HAP-1 (cell line): ENCODE measurements at regions of chr4 and their contacts with region 1.

Region 1: GRCh38 chr4:55736605-55737183 is 82.9 kb upstream of the EXOC1L start:
- DNase-seq: peak in 1 of 2 experiments; percentile 16
- H3K4me3 ChIP-seq: no peak overlapping the region
- H3K4me1 ChIP-seq: peaks cover 2% of the 10 kb centered on the region; the same call in 1 of the 2 replicates
- H3K27me3 ChIP-seq: peaks cover 7% of the 10 kb centered on the region; the same call in 1 of the 2 replicates

Region 2: GRCh38 chr4:55087009-55087929 is 649.4 kb before region 1 on chr4:
- in situ Hi-C with region 1: no loop called
- DNase-seq: peak; percentile 46 to 66
- H3K4me3 ChIP-seq: no peak overlapping the region
- H3K4me1 ChIP-seq: peaks cover 4% of the 10 kb centered on the region
- H3K27me3 ChIP-seq: 0 out of 2 replicates have a peak, but pooled peaks cover 3% of the 10 kb centered on the region

Region 3: DNA sequence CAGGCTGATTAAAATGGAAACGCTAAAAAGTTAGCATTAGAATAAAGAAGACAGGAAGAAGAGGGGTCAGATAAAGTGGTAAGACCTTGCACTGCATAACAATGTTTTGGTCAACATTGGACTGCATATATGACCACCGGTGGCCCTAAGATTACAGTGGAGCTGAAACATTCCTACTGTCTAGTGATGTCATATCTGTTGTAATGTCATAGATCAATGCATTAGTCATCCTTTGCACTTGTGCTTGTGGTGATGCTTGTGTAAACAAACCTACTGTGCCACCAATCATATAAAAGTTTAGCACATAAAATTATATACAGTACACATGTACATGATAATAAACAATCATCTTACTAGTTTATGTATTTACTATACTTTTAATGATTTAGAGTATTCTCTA is 268.0 kb before region 1 on chr4:
- in situ Hi-C with region 1: loop called (anchors 25 kb)
- DNase-seq: no peak
- H3K4me3 ChIP-seq: no peak overlapping the region
- H3K4me1 ChIP-seq: no peaks in the 10 kb centered on the region
- H3K27me3 ChIP-seq: no peaks in the 10 kb centered on the region